Lower leg skin (tissue), 4 donors: ENCODE measurements at regions of chr10 and their contacts with region 1.

Region 1: DNA sequence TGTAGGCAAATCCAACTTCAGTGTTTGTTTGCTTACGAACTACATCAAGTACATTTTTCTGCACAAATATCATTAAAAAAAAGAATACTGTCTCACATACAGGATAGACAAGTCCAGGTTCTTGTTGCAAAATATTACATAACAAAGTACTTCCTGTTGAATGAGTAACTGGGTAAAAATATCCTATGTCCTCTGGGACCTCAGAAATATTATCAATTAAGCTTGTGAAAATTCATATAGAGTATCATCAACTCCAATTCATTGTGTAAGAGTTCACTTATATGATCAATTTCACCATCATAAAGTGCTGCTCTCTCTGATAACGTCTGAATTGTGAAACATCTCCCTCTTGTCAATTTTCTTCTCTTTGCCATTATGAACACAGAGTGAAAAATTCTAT is 22.6 kb downstream of the HERC4 start:
- DNase-seq: no peak
- H3K4me3 ChIP-seq: no peak overlapping the region
- CTCF ChIP-seq: no peak
- POLR2A ChIP-seq: no peak

Region 2: DNA sequence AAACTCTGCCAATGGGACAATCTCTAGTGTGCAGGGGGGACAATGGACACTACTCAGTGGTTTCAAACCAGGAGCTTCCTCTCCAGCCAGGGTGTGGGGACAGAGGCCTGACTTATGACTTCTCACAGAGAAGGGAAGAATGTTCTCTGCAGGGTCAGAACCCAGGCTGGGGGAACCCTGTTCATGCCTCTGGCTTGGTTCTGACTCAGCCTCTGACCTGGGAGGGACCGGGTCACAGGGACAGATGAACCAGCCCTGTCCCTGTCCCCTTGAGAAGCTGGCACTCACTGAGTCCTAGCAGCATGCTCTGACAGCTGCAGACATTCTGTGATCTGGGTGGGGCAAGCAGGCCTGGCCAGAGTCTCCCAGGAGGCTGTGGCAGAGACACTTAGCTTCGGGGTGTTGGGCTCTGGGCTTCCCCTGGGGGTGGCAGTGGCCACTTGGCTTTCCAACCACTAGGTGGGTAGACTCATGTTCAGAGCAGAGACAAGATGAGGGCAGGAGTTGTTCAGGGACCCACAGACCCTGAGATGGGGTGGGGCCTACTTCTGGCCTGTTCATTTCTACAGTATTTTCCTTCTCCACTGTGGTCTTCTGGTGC is 1412.4 kb after region 1 on chr10:
- intact Hi-C with region 1: loop called (anchors 5 kb)
- DNase-seq: no peak
- H3K4me3 ChIP-seq: no peak overlapping the region
- CTCF ChIP-seq: no peak
- POLR2A ChIP-seq: no peak